ENCODE measurements at regions of chr18 and their contacts with region 1.

Region 1: DNA sequence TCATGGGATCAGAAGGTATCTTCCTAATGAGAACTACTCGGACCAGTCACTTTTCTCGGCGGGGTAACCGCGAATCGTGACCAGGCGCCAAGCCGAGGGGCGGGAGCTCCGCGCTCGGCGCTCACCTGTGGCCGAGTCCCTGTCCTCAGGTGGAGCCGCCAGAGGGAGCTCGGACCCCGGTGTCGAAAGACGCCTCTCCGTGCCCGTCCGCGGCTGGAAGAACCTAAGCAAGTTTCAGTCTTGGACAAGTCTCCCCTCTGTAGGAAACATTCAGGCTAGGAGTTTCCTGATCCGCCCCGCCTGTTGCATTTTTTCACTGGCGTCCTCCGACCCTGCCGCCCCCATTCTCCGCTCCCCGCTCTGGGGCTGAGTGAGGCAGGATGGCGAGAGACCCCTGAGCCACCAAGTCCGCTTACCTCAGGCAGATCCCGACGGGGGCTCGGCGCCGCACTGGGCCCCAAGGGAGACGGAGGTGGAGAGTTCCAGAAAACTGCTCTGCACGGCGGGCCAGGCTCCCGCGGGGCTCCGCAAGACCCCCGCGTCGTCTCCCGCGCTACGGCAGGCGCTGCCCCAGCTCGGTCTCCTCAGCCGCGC is 478 bp downstream of the DSEL start:
- DNase-seq: peak; percentile 22
- H3K4me3 ChIP-seq: peak overlapping the region; percentile 70
- H3K27me3 ChIP-seq: no peaks in the 10 kb centered on the region
- CTCF ChIP-seq: peak; percentile 88

Region 2: DNA sequence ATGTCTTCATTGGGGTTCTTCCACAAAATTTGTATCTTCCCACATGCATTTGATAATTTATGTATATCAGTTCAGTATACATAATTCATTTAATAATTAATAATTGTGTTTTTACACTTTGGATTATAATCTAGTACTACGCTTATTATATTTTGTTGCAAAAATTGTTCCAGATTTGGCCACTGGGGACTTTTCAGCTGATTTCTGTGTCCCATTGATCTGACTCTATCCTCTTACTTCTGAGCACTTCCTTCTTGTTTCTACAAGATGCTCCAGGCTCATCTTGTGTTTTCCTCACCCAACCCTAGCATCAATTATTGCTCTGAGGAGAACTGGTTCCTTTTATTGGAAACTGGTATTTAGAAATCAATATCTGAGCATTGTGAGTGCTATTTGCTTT is 696.8 kb before region 1 on chr18:
- CTCF ChIA-PET with region 1: no interaction called
- POLR2A ChIA-PET with region 1: no interaction called
- DNase-seq: no peak
- H3K4me3 ChIP-seq: no peak overlapping the region
- H3K27me3 ChIP-seq: no peaks in the 10 kb centered on the region
- CTCF ChIP-seq: no peak

Region 3: GRCh38 chr18:67217551-67218166 is 298.4 kb before region 1 on chr18:
- CTCF ChIA-PET with region 1: interaction called, 11 read pairs
- POLR2A ChIA-PET with region 1: no interaction called
- DNase-seq: peak; percentile 10
- H3K4me3 ChIP-seq: no peak overlapping the region
- H3K27me3 ChIP-seq: no peaks in the 10 kb centered on the region
- CTCF ChIP-seq: peak; percentile 64

Region 4: GRCh38 chr18:67608615-67609273 is 92.7 kb after region 1 on chr18:
- CTCF ChIA-PET with region 1: no interaction called
- POLR2A ChIA-PET with region 1: no interaction called
- DNase-seq: no peak
- H3K4me3 ChIP-seq: no peak overlapping the region
- H3K27me3 ChIP-seq: no peaks in the 10 kb centered on the region
- CTCF ChIP-seq: no peak

Region 5: DNA sequence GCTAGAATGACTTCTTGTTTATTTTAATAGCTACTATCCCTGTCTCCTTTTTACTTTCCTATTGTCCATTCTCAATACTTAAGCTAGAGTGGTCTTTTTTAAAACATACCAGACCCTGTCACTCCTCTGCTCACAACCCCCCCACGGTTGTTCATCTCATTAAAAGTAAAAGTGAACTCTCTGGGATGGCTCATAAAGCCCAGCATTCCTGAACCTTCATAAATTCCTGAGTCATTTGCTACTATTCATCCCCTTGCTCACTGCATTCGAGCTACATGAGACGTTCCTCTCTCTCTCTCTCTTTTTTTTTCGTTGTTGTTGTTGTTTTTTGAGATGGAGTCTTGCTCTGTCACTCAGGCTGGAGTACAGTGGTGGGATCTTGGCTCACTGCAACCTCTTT is 149.2 kb after region 1 on chr18:
- CTCF ChIA-PET with region 1: interaction called, 10 read pairs
- POLR2A ChIA-PET with region 1: interaction called, 4 read pairs
- DNase-seq: no peak
- H3K4me3 ChIP-seq: no peak overlapping the region
- H3K27me3 ChIP-seq: no peaks in the 10 kb centered on the region
- CTCF ChIP-seq: 0 out of 2 replicates have a peak, but pooled peaks have one; percentile 0

Region 6: GRCh38 chr18:67845035-67845434 is 329.0 kb after region 1 on chr18:
- CTCF ChIA-PET with region 1: no interaction called
- POLR2A ChIA-PET with region 1: interaction called, 17 read pairs
- DNase-seq: no peak
- H3K4me3 ChIP-seq: no peak overlapping the region
- H3K27me3 ChIP-seq: no peaks in the 10 kb centered on the region
- CTCF ChIP-seq: no peak

Region 7: GRCh38 chr18:68588169-68588568 is 1072.1 kb after region 1 on chr18:
- CTCF ChIA-PET with region 1: no interaction called
- POLR2A ChIA-PET with region 1: interaction called, 27 read pairs
- DNase-seq: no peak
- H3K4me3 ChIP-seq: no peak overlapping the region
- H3K27me3 ChIP-seq: no peaks in the 10 kb centered on the region
- CTCF ChIP-seq: no peak

Measured in BJ (cell line).